HCT116 (cell line): ENCODE measurements at regions of chr7 and their contacts with region 1.

Region 1: GRCh38 chr7:87797798-87798403 is 78.3 kb downstream of the SLC25A40 start:
- DNase-seq: peak; percentile 35
- ATAC-seq: peak; percentile 89
- H3K4me3 ChIP-seq: no peak overlapping the region
- H3K27ac ChIP-seq: no peak overlapping the region
- H3K4me1 ChIP-seq: no peaks in the 10 kb centered on the region
- H3K27me3 ChIP-seq: no peaks in the 10 kb centered on the region
- CTCF ChIP-seq: peak; percentile 43 to 66 (median 59); a peak in 5 of 6 replicates
- POLR2A ChIP-seq: no peak
- RAD21 ChIP-seq: peak; percentile 82

Region 2: DNA sequence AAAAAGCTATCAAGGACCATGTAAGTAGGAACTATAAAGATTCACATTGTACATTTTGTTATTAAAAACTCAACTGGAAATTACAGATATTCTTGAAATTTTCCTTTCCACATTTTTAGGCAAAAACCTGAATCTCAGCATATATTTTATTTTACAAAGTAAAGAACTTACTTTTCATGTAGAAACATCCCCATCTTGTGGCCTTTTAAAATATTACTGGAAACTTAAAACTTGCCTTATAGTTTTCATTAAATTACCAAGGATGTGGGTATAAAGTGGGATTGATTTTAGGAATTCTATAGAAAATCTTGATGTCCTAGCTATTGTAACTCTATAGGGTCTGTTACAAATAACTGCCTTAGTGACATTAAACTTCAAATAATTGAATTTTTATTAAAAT is 89.0 kb after region 1 on chr7:
- CTCF ChIA-PET with region 1: interaction called, 11 read pairs
- POLR2A ChIA-PET with region 1: interaction called, 5 read pairs
- RAD21 ChIA-PET with region 1: no interaction called
- intact Hi-C with region 1: loop called (anchors 1 kb)
- DNase-seq: peak; percentile 3
- ATAC-seq: no peak
- H3K4me3 ChIP-seq: no peak overlapping the region
- H3K27ac ChIP-seq: no peak overlapping the region
- H3K4me1 ChIP-seq: no peaks in the 10 kb centered on the region
- H3K27me3 ChIP-seq: no peaks in the 10 kb centered on the region
- CTCF ChIP-seq: peak in 2 of 3 experiments; percentile 37 to 53; a peak in 3 of 6 replicates
- POLR2A ChIP-seq: no peak
- RAD21 ChIP-seq: peak; percentile 68

Region 3: GRCh38 chr7:87926581-87927461 is 128.9 kb after region 1 on chr7:
- CTCF ChIA-PET with region 1: no interaction called
- POLR2A ChIA-PET with region 1: no interaction called
- RAD21 ChIA-PET with region 1: no interaction called
- intact Hi-C with region 1: no loop called
- DNase-seq: no peak
- ATAC-seq: peak; percentile 34; the same call in 1 of the 2 replicates
- H3K4me3 ChIP-seq: no peak overlapping the region
- H3K27ac ChIP-seq: no peak overlapping the region
- H3K4me1 ChIP-seq: peaks cover 5 to 8% of the 10 kb centered on the region in 2 experiments; a peak in 2 of 4 replicates
- H3K27me3 ChIP-seq: no peaks in the 10 kb centered on the region
- CTCF ChIP-seq: no peak
- POLR2A ChIP-seq: no peak
- RAD21 ChIP-seq: no peak

Region 4: DNA sequence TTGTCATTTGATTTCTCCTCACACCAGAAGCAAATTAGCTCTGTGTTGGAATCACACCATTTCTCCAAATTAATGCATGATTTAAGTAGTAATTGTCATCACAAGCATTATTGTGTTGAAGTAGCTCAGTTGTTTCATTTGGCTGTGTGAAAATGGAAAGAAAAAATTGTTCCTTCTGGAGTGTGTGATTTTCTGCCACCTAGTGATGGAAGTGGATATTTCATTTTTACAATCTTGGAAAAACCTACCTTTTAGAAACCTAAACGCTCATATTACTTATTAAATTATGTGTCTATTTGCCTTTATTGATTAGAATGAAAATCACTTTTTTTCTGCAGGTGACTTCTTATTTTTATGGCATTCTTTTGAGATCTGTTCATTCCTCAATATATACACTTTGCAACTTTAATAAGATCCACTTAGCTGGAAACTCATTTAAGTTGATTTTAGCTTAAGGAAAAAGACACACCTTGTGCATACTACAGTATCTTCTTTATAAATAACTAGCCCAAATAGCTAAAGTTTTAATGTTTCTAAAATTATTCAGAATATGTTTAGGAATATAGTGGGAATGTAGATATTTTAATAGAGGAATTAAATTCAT is 371.9 kb after region 1 on chr7:
- CTCF ChIA-PET with region 1: interaction called, 6 read pairs
- POLR2A ChIA-PET with region 1: no interaction called
- RAD21 ChIA-PET with region 1: no interaction called
- intact Hi-C with region 1: loop called (anchors 1 kb)
- DNase-seq: no peak
- ATAC-seq: no peak
- H3K4me3 ChIP-seq: no peak overlapping the region
- H3K27ac ChIP-seq: no peak overlapping the region
- H3K4me1 ChIP-seq: no peaks in the 10 kb centered on the region
- H3K27me3 ChIP-seq: no peaks in the 10 kb centered on the region
- CTCF ChIP-seq: peak; percentile 23 to 66 (median 38); a peak in 3 of 6 replicates
- POLR2A ChIP-seq: no peak
- RAD21 ChIP-seq: peak; percentile 57

Region 5: DNA sequence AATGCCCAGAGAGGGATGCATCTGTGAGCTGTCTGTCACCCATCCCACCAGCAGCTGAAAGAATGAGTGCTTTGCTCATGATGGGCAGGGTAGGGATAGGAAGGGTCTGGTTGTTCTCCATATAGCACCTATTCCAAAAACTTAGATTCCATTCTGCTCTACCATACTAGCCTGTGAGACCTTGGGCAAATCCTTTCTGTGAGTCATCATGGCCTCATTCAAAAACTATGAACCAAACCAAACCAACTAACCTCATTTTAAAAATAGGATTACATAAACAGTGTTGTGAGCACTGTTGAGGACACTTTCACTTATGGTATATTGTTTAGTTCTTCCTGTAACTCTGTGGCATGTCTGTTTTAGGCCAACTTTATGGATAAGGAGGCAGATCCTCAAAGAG is 539.7 kb after region 1 on chr7:
- CTCF ChIA-PET with region 1: no interaction called
- POLR2A ChIA-PET with region 1: no interaction called
- RAD21 ChIA-PET with region 1: no interaction called
- intact Hi-C with region 1: no loop called
- DNase-seq: no peak
- ATAC-seq: no peak
- H3K4me3 ChIP-seq: no peak overlapping the region
- H3K27ac ChIP-seq: no peak overlapping the region
- H3K4me1 ChIP-seq: peaks cover 0 to 5% of the 10 kb centered on the region in 2 experiments; a peak in 1 of 4 replicates
- H3K27me3 ChIP-seq: no peaks in the 10 kb centered on the region
- CTCF ChIP-seq: no peak
- POLR2A ChIP-seq: no peak
- RAD21 ChIP-seq: no peak

Region 6: DNA sequence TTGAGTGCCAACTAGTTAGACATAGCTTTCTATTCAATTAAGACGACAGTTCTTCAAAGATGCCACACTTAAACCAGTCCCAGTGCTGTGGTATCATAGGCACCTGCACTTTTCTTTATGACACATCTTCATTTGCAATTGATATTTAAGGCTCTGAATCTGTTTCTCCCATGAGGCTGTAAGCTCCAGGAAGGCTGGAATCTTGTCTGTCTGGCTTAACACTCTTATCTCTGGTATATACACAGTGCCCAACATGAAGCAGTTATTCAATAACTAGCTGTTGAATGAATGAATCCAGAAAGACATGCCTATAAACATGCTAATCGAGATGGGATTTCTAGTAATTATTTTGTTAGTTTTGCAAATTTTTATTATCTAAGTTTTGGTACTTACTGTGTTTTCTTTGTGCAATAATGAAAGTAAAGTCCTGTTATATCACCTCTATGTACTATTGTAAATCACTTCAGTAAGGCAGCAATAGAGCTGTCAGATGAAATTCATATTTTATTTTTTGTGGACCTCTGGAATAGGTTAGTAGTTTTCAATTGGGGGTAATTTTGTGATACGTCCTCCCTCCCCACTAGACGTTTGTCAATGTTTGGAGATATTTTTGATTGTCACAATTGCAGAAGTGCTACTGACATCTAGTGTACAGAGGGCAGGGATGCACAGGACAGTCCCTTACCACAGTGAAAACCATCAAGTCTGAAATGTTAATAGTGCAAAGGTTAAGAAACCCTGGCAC is 560.1 kb after region 1 on chr7:
- CTCF ChIA-PET with region 1: no interaction called
- POLR2A ChIA-PET with region 1: no interaction called
- RAD21 ChIA-PET with region 1: no interaction called
- intact Hi-C with region 1: loop called (anchors 10 kb)
- DNase-seq: no peak
- ATAC-seq: peak; percentile 79
- H3K4me3 ChIP-seq: no peak overlapping the region
- H3K27ac ChIP-seq: no peak overlapping the region
- H3K4me1 ChIP-seq: no peaks in the 10 kb centered on the region
- H3K27me3 ChIP-seq: no peaks in the 10 kb centered on the region
- CTCF ChIP-seq: peak; percentile 48 to 55 (median 52); a peak in 5 of 6 replicates
- POLR2A ChIP-seq: no peak
- RAD21 ChIP-seq: peak; percentile 65